ENCODE measurements at regions of chr22 and their contacts with region 1.

Region 1: DNA sequence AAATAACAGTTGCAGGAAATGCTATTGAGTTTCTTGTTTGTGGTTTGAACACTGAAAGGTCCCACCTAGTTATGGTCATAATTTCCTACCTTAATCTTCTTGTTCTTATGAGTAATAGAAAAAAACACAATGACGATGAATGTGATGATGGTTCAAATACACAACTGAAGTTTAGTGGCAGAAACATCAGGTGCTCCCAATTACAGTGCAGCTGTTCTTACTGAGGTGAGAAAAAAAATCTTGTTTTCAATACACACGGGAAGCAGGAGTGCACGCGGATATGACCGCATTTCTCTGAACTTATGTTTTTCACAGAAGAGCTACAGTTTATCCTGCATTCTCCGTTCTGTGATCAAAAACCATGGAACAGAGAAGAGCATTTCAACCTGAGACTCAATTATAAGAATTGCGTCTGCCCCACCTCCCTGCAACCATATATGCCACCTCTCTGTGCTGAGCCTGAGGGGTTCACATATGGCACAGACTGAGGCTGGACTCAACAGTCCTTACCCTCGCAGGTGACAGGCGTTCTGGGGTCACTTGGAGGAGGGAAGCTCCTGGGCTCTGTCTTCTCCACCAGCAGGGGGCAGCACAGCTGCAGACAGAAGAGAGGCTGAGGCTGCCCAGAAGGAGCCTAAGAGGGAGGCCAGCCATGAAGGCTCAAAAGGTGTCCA is 99.7 kb upstream of the IGLL5 start:
- DNase-seq: peak; percentile 81
- ATAC-seq: peak; percentile 84
- H3K4me3 Mint-ChIP-seq: no peak overlapping the region
- H3K27ac Mint-ChIP-seq: peak overlapping the region; percentile 46
- H3K4me1 Mint-ChIP-seq: peaks cover 34% of the 10 kb centered on the region
- H3K27me3 Mint-ChIP-seq: no peaks in the 10 kb centered on the region
- CTCF ChIP-seq: peak; percentile 89

Region 2: GRCh38 chr22:22666307-22667091 is 121.4 kb before region 1 on chr22:
- CTCF ChIA-PET with region 1: no interaction called
- POLR2A ChIA-PET with region 1: no interaction called
- intact Hi-C with region 1: no loop called
- DNase-seq: peak; percentile 38
- ATAC-seq: peak; percentile 80
- H3K4me3 Mint-ChIP-seq: no peak overlapping the region
- H3K27ac Mint-ChIP-seq: no peak overlapping the region
- H3K4me1 Mint-ChIP-seq: no peaks in the 10 kb centered on the region
- H3K27me3 Mint-ChIP-seq: no peaks in the 10 kb centered on the region
- CTCF ChIP-seq: peak; percentile 43

Region 3: DNA sequence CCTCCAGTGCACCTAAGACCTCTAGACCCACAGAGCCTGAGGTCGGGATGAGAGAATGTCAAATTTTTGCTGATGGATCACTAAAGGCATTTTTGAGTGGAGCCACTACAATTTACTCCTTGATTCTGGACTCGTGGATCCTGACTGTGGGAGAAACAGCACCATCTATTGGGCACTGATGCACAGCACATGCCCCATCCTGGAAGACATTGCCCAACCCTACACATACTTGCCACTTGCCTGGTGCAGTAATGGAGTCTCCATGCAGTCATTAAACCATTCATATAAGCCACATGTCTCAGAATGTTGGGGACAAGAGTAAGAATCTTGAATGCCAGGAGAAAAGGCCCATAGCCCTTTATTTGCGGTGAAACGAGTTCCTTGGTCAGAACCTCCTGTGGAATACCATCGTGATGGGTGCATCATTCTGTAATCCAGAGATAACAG is 39.6 kb before region 1 on chr22:
- CTCF ChIA-PET with region 1: interaction called, 22 read pairs
- POLR2A ChIA-PET with region 1: no interaction called
- intact Hi-C with region 1: no loop called
- DNase-seq: peak; percentile 70
- ATAC-seq: peak; percentile 87
- H3K4me3 Mint-ChIP-seq: no peak overlapping the region
- H3K27ac Mint-ChIP-seq: no peak overlapping the region
- H3K4me1 Mint-ChIP-seq: peaks cover 19% of the 10 kb centered on the region
- H3K27me3 Mint-ChIP-seq: no peaks in the 10 kb centered on the region
- CTCF ChIP-seq: peak; percentile 84

Region 4: DNA sequence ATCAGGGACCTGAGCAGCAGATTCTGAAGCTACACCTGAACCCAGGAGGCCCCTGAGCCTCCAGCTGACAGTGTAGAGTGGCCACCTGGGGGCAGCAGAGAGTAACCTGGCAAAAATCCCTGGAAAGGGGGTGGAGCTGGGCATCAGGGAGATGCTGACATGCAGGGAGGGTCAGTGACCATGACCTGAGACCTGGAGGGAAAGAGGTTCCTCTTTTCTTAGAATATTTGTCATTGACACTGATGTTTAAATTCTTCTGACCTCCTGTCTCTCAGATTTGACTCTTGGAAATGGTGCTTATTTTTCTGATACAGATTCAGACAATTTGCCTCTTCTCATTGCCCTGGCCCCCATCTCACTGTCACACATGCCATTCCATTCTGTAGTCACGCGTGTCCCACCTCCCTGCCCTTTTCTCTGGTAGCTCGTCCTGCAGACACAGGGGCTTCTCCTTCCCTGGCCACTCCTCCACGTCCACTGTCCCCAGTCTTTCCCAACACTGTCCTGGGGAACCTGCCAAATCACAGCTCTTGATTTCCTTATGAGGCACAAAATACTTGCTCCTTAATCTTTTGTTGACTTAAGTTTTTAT is 17.5 kb before region 1 on chr22:
- CTCF ChIA-PET with region 1: interaction called, 22 read pairs
- POLR2A ChIA-PET with region 1: no interaction called
- intact Hi-C with region 1: no loop called
- DNase-seq: peak; percentile 65
- ATAC-seq: peak; percentile 62
- H3K4me3 Mint-ChIP-seq: no peak overlapping the region
- H3K27ac Mint-ChIP-seq: no peak overlapping the region
- H3K4me1 Mint-ChIP-seq: peaks cover 4% of the 10 kb centered on the region
- H3K27me3 Mint-ChIP-seq: no peaks in the 10 kb centered on the region
- CTCF ChIP-seq: peak; percentile 80

Region 5: DNA sequence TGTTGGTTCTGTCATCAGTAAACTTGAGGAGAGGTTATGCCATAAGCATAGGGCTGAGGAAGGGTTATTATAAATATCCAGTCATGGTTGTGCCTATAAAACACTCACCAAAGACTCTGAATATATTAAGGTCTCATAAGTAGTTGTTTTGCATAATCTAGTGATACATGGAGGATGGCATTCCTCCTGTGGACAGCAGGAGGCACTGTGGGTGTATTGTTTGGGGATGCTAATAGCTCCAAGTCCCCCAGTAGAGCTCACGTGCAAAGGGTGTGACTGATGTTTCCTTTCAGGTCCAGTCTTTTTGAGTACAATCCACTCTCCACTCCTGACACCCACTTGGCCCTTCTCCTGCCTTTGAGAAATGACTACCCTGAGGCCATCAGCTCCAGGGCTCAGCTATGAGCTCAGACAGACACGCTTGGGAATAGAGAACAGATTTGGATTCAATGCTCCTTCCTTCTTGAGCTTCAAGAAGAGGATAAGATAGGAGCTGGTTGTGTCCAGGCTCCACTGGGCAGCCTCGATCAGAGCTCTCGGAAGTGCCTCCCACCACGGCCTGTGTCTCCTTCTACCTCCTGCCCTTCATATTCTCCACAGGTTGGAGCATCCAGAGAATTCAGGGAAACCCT is 14.5 kb after region 1 on chr22:
- CTCF ChIA-PET with region 1: interaction called, 19 read pairs
- POLR2A ChIA-PET with region 1: interaction called, 4 read pairs
- intact Hi-C with region 1: no loop called
- DNase-seq: peak; percentile 66
- ATAC-seq: peak; percentile 64
- H3K4me3 Mint-ChIP-seq: no peak overlapping the region
- H3K27ac Mint-ChIP-seq: no peak overlapping the region
- H3K4me1 Mint-ChIP-seq: peaks cover 28% of the 10 kb centered on the region
- H3K27me3 Mint-ChIP-seq: no peaks in the 10 kb centered on the region
- CTCF ChIP-seq: peak; percentile 80

Region 6: DNA sequence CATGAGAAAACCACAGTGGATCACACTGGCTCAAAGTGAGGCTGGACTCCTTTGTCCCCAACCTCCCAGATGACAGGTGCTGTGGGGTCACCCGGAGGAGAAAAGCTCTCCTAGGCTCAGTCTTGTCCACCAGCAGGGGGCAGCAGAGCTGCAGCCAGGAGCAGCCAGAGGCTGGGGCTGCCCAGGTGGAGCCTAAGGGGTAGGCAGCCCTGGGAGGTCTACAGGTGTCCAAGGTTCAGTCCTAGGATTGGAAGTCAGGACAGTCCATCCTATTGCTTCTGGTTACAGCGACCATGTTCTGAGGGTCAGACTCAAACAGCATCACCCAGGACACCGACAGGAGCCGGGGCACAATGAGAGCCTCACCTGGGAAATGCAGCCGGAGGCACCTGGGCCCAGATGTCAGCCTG is 22.1 kb after region 1 on chr22:
- CTCF ChIA-PET with region 1: interaction called, 12 read pairs
- POLR2A ChIA-PET with region 1: no interaction called
- intact Hi-C with region 1: no loop called
- DNase-seq: peak; percentile 72
- ATAC-seq: peak; percentile 78
- H3K4me3 Mint-ChIP-seq: no peak overlapping the region
- H3K27ac Mint-ChIP-seq: no peak overlapping the region
- H3K4me1 Mint-ChIP-seq: peaks cover 25% of the 10 kb centered on the region
- H3K27me3 Mint-ChIP-seq: no peaks in the 10 kb centered on the region
- CTCF ChIP-seq: peak; percentile 72

Region 7: DNA sequence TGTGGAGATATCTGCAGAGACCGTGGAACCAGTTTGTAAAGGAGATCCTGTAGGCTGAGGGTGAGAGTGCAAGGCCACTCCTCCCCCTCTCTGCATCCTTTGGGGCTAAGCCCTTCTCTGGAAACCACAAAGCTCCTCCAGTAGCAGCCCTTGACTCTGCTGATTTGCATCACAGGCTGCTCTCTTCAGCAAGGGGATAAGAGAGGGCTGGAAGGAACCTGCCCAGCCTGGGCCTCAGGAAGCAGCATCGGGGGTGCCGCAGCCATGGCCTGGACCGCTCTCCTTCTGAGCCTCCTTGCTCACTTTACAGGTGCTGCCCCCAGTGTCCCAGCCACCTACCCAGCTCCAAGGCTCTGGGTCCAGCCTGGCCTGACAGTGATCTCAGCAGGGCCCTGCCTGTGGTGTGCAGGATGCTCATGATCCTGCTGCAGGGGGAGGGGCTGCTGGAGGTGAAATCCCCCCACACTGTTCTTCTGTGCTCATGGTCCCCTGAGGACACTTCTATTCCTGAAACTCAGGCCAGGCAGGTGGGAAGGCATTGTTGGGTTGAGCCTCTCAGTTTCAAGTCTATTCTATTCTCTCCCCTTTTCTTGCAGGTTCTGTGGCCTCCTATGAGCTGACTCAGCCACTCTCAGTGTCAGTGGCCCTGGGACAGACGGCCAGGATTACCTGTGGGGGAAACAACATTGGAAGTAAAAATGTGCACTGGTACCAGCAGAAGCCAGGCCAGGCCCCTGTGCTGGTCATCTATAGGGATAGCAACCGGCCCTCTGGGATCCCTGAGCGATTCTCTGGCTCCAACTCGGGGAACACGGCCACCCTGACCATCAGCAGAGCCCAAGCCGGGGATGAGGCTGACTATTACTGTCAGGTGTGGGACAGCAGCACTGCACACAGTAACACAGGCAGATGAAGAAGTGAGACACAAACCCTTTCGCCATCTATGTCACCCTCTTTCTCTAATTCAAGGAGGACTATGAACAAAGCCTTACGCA is 31.2 kb after region 1 on chr22:
- CTCF ChIA-PET with region 1: interaction called, 12 read pairs
- POLR2A ChIA-PET with region 1: interaction called, 3 read pairs
- intact Hi-C with region 1: no loop called
- DNase-seq: peak; percentile 56
- ATAC-seq: peak; percentile 69
- H3K4me3 Mint-ChIP-seq: no peak overlapping the region
- H3K27ac Mint-ChIP-seq: peak overlapping the region; percentile 70
- H3K4me1 Mint-ChIP-seq: peaks cover 92% of the 10 kb centered on the region
- H3K27me3 Mint-ChIP-seq: no peaks in the 10 kb centered on the region
- CTCF ChIP-seq: no peak

Region 8: DNA sequence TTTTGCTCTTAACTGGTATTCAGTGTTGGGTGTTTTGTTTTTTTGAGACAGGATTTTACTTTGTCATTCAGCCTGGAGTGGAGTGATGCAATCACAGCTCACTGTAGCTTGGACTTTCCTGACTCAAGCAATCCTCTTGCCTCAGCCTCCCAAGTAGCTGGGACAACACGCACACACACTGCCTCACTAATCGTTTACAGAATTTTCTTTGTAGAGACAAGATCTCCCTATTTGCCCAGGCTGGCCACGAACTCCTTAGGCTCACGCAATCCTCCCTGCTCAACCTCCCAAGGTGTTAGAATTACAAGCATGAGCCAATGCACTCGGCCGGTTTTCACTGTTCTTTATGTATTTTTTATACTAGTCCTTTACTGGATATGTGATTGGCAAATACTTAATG is 48.7 kb after region 1 on chr22:
- CTCF ChIA-PET with region 1: no interaction called
- POLR2A ChIA-PET with region 1: no interaction called
- intact Hi-C with region 1: no loop called
- DNase-seq: no peak
- ATAC-seq: no peak
- H3K4me3 Mint-ChIP-seq: no peak overlapping the region
- H3K27ac Mint-ChIP-seq: no peak overlapping the region
- H3K4me1 Mint-ChIP-seq: peaks cover 21% of the 10 kb centered on the region
- H3K27me3 Mint-ChIP-seq: no peaks in the 10 kb centered on the region
- CTCF ChIP-seq: no peak

Region 9: DNA sequence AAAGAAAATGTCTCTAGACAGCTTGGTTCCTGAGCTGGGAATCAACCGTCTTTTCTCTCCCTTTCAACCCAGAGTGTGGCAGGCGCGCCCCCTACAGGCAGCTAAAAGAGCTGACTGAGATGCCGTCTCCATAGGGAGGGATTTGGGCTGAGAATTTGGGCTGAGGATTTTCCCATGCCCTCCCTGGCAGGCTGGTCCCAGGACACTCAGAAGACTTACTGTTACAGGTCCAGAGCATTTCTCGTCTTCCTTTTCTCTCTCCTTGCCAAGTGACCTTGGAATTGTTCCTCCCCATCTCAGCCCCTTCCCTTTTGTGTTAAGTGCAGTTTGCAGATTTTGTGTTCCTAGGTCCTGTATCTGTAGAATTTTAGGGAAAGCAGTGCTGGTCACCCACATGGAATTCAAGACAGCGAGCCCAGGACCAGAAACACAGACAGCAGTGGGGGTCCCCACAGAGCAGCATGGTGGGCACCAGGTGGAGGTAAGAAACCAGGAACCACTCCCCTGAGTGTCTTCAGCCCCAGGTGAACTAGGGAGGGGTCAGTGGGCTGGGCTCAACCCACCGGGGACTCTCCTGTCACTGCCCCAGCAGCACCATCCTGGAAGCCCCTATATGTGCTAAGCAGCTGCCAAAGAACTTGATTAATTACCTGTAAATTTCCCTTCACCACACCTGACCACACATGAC is 89.7 kb after region 1 on chr22:
- CTCF ChIA-PET with region 1: interaction called, 72 read pairs
- POLR2A ChIA-PET with region 1: no interaction called
- intact Hi-C with region 1: no loop called
- DNase-seq: peak; percentile 77
- ATAC-seq: no peak
- H3K4me3 Mint-ChIP-seq: no peak overlapping the region
- H3K27ac Mint-ChIP-seq: no peak overlapping the region
- H3K4me1 Mint-ChIP-seq: peaks cover 2% of the 10 kb centered on the region
- H3K27me3 Mint-ChIP-seq: no peaks in the 10 kb centered on the region
- CTCF ChIP-seq: peak; percentile 82

Measured in activated CD8-positive, alpha-beta T cell treated with anti-CD3 and anti-CD28 coated beads for 36 hours (primary cell).